Ascending aorta (tissue), 2 donors: ENCODE measurements at regions of chr17 and their contacts with region 1.

Region 1: GRCh38 chr17:82273327-82274133 is at the start of gene CSNK1D:
- DNase-seq: peak; percentile 54 to 95
- H3K4me3 ChIP-seq: peak within 1 kb of the TSS; percentile 87 to 99
- H3K27ac ChIP-seq: peak within 1 kb of the TSS; percentile 97 to 99
- H3K4me1 ChIP-seq: peaks cover 11 to 25% of the 10 kb centered on the region in 2 donors
- H3K27me3 ChIP-seq: no peaks in the 10 kb centered on the region
- CTCF ChIP-seq: no peak
- total RNA-seq, gene CSNK1D: 86.8 TPM

Region 2: DNA sequence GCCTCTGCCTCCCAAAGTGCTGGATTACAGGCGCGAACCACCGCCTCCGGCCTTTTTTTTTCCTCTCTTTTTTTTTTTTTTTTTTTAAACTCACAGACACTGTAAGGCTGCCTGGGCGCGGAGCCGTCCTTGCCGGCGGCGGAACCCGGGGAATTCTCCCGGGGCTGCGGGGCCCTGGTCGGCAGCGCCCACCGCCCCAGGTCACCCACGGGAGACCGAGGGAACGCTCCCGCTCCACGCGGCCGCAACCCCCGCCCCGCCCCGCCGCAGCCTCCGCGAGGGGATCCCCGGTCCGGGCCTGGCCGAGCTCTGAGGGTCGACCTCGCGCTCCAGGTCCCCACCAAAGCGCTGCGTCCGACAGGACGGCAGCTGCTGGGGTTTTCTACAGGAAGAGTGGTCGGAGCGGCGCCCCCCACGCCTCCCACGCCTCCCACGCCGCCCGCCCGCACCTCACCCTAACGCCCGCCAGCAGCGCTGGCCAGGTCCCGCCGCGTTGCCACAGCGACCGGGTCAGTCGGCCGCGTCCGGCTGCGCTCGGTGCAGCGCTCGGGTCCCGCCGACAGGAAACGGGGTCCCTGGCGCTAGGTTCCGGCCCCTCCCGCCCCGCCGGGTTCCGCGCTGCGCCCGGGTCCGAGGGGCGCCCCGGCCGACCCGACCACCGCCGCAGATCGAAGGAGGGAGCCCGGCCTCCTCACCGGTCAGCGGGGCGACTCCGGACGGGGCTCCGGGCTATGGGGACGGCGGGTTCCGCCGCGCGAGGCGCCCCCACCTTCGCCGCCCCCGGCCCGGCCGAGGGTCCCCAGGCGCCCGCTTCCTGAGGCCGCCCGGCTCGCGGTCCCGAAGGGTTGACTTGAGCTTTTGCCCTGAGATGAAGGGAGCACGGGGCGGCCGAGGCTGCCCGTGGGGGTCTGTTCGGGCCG is 60.9 kb before region 1 on chr17 and contains the start of gene CCDC57:
- intact Hi-C with region 1: loop called (anchors 2 kb)
- DNase-seq: peak in 1 of 2 donors; percentile 89
- H3K4me3 ChIP-seq: peak within 1 kb of the TSS; percentile 55 to 99
- H3K27ac ChIP-seq: peak within 1 kb of the TSS; percentile 55 to 89
- H3K4me1 ChIP-seq: peaks cover 20 to 30% of the 10 kb centered on the region in 2 donors
- H3K27me3 ChIP-seq: no peaks in the 10 kb centered on the region
- CTCF ChIP-seq: peak in 1 of 3 experiments; percentile 10
- total RNA-seq, gene CCDC57: 12.8 TPM

Region 3: DNA sequence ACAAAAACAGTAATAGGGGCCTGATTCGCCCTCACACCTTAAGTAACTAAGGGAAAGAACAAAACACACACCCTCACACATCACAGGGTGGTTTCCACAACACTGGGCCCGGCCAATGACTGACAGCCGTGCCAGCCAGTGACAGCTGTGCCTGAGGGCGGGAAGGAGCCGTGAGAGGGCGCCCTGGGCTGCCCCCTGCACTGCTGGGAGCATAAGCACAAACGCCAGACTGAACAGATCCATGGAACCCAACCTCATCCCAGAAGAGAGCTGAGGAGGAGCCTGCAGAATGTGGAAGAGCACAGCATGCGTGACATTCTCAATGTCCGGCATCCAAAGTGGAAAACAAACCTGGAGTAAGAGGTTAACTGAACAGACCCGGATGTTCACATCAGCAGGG is 16.1 kb before region 1 on chr17:
- intact Hi-C with region 1: no loop called
- DNase-seq: no peak
- H3K4me3 ChIP-seq: no peak overlapping the region
- H3K27ac ChIP-seq: no peak overlapping the region
- H3K4me1 ChIP-seq: no peaks in the 10 kb centered on the region
- H3K27me3 ChIP-seq: no peaks in the 10 kb centered on the region
- CTCF ChIP-seq: no peak

Region 4: DNA sequence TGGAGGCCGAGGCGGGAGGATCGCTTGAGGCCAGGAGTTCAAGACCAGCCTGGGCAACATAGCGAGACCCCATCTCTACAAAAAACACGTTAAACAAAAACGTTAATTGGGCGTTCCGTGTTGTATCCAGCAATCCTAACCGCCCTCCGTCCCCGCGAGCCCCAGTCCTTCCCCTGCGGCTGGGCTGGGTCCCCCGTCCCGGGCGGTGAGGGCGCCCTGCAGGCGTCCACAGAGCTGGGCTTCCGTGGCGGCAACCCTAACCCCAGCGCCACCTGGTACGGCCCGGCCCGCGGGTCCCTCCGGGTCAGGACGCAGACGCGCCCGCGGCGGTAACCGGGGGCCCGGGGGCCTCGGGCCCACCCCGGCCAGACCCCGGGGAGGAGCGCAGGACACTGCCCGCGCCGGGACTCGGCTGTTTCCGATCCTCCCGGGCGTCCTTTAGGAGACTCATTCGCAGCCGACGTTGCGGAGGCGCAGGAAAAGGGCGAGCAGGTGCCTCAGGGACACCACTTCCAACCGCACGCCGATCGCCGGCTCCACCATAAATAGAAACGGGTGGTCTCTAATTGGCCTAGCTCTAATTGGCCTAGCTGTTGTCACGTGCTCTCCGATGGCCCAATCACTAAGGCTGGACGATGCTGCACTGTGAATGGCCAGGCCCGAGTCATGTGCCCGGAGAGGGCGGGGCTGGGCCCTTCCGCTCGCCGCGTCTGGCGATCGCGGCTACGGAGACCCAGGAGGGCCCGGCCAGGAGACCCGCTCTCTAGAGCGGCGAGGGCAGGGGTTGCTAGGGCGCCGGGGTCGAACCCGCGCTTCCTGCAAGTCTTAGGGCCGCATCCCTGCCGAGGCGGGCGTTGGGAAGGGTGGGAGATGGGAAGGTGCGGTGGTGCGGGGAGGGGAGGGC is 19.0 kb after region 1 on chr17:
- intact Hi-C with region 1: loop called (anchors 1 kb)
- DNase-seq: peak; percentile 95 to 98
- H3K4me3 ChIP-seq: peak overlapping the region; percentile 91 to 97
- H3K27ac ChIP-seq: peak overlapping the region; percentile 98 to 99
- H3K4me1 ChIP-seq: peaks cover 4 to 22% of the 10 kb centered on the region in 2 donors
- H3K27me3 ChIP-seq: no peaks in the 10 kb centered on the region
- CTCF ChIP-seq: no peak

Region 5: GRCh38 chr17:82297714-82298537 is 24.4 kb after region 1 on chr17:
- intact Hi-C with region 1: loop called (anchors 1 kb)
- DNase-seq: peak; percentile 91 to 96
- H3K4me3 ChIP-seq: peak overlapping the region; percentile 54 to 67
- H3K27ac ChIP-seq: peak overlapping the region; percentile 83 to 90
- H3K4me1 ChIP-seq: peaks cover 12 to 31% of the 10 kb centered on the region in 2 donors
- H3K27me3 ChIP-seq: no peaks in the 10 kb centered on the region
- CTCF ChIP-seq: peak in 1 of 3 experiments; percentile 10

Region 6: DNA sequence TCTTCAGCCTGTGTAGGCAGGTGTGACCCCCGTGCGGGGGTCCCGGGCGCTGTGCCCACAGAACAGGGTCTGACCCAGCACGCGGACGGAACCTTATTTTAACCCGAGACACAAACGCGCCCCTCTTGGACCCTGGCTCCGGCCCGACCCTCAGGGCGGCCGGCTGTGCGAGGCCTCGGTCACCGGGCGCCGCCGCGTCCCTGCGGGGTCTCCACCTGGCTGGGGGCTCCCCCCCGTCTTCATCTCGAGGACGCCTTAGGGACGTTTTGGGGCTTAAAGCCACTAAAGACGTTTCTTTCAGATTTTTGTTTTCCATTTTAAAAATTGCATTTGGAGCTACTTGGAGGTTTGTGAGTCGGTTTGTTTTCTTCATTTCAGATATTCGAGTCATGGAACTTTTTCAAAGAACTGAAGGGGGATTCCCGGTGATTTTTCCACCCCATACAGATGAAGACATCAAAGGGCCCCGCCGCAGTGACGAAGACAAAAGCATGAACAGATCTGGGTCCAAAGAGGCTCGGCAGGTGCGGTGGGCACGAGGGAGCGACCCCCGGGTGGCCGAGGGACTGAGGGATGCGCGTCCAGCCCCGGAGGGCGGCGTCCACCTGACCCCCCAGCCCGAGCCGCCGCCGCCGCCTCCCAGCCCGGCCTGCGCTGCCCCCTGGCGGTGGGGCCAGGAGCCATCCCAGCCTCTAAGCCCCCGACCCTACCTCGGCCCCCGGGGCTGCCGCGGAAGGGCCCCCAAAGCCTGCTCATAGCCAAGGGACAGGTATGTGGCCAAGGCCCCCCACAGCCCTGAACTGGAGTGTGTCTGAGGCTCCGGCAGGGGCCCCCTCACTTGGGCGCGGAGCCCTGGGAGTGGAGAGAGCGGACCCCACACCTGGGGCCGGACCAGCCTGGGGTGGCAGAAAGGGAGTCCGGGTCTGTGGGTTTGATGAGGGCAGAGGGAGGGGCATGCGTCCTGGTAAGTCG is 47.7 kb after region 1 on chr17:
- intact Hi-C with region 1: no loop called
- DNase-seq: no peak
- H3K4me3 ChIP-seq: no peak overlapping the region
- H3K27ac ChIP-seq: no peak overlapping the region
- H3K4me1 ChIP-seq: peaks cover 0 to 5% of the 10 kb centered on the region in 2 donors
- H3K27me3 ChIP-seq: peaks cover 7% of the 10 kb centered on the region
- CTCF ChIP-seq: peak; percentile 95 to 96 (median 96)